ENCODE measurements at regions of chr19 and their contacts with region 1.

Region 1: GRCh38 chr19:18328340-18329034 is 5.6 kb upstream of the LSM4 start:
- DNase-seq: peak; percentile 94
- H3K4me3 ChIP-seq: peak overlapping the region in 2 of 4 donors; percentile 18 to 34
- H3K27ac ChIP-seq: peak overlapping the region; percentile 74 to 86 (median 80)
- H3K4me1 ChIP-seq: peaks cover 15 to 30% (median 18%) of the 10 kb centered on the region in 4 donors
- H3K27me3 ChIP-seq: no peaks in the 10 kb centered on the region
- CTCF ChIP-seq: peak; percentile 86 to 100 (median 93)
- EP300 ChIP-seq: no peak
- POLR2A ChIP-seq: no peak

Region 2: DNA sequence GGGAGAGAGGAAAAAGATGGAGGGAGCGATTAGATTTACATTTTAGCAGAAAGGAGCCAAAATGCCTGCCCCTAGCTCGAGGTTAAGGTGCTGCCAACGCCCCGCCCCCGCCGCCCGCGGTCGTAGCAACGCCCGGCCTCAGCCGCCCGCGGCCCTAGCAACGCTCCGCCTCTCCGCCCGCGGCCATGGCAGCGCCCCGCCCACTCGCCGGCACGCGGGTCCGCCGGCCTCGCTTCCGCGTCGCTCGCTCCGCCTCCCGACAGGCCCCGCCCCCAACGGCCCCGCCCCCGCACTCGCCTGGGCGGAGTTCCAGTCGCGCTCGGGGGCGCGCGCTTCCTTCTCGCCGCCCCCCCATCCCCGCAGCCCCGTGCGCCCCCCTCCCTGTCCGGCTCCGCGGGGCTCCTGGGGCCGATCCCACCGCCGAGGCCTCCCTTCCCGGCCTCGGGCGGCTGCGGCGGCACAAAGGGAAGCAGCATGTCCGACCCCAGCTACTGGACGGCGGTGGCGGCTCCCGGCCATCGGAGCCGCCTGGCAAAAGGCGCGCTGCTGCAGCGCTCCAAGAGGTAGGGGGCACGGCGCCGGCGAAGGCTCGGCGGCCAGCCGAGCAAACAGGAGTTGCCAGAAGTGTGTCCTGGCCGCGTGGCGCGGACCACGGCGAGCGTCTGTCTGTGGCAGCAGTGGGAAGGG is 210.7 kb before region 1 on chr19:
- in situ Hi-C with region 1: no loop called
- intact Hi-C with region 1: no loop called
- DNase-seq: peak; percentile 95
- H3K4me3 ChIP-seq: peak overlapping the region; percentile 66 to 93 (median 77)
- H3K27ac ChIP-seq: peak overlapping the region; percentile 80 to 85 (median 83)
- H3K4me1 ChIP-seq: peaks cover 10 to 24% (median 18%) of the 10 kb centered on the region in 4 donors
- H3K27me3 ChIP-seq: no peaks in the 10 kb centered on the region
- CTCF ChIP-seq: no peak
- EP300 ChIP-seq: no peak
- POLR2A ChIP-seq: no peak

Region 3: GRCh38 chr19:18203863-18204393 is 124.6 kb before region 1 on chr19 and contains the start of gene RAB3A:
- in situ Hi-C with region 1: loop called in 1 of 4 experiments (anchors 25 kb)
- intact Hi-C with region 1: no loop called
- DNase-seq: peak; percentile 100
- H3K4me3 ChIP-seq: peak within 1 kb of the TSS; percentile 66 to 83 (median 75)
- H3K27ac ChIP-seq: peak within 1 kb of the TSS; percentile 90 to 99 (median 96)
- H3K4me1 ChIP-seq: peaks cover 0 to 27% (median 23%) of the 10 kb centered on the region in 4 donors
- H3K27me3 ChIP-seq: peaks cover 9% of the 10 kb centered on the region
- CTCF ChIP-seq: peak in 2 of 5 experiments; percentile 12 to 35
- EP300 ChIP-seq: peak; percentile 90
- POLR2A ChIP-seq: peak; percentile 79
- total RNA-seq, gene RAB3A: 2.2 to 8.6 (median 3.8) TPM in 3 of 4 donors, not detected in the other